PC-9 (cell line): ENCODE measurements at regions of chr15 and their contacts with region 1.

Region 1: GRCh38 chr15:69807755-69808154 is 290.0 kb downstream of the TLE3 start:
- DNase-seq: peak; percentile 68 to 74
- H3K4me3 ChIP-seq: no peak overlapping the region
- H3K27ac ChIP-seq: no peak overlapping the region
- H3K4me1 ChIP-seq: peaks cover 30% of the 10 kb centered on the region
- H3K27me3 ChIP-seq: no peaks in the 10 kb centered on the region
- CTCF ChIP-seq: no peak

Region 2: GRCh38 chr15:69424748-69425413 is 382.9 kb before region 1 on chr15:
- CTCF ChIA-PET with region 1: no interaction called
- POLR2A ChIA-PET with region 1: no interaction called
- intact Hi-C with region 1: no loop called
- DNase-seq: no peak
- H3K4me3 ChIP-seq: no peak overlapping the region
- H3K27ac ChIP-seq: no peak overlapping the region
- H3K4me1 ChIP-seq: no peaks in the 10 kb centered on the region
- H3K27me3 ChIP-seq: no peaks in the 10 kb centered on the region
- CTCF ChIP-seq: no peak

Region 3: GRCh38 chr15:69451951-69452691 is 355.6 kb before region 1 on chr15:
- CTCF ChIA-PET with region 1: no interaction called
- POLR2A ChIA-PET with region 1: no interaction called
- intact Hi-C with region 1: no loop called
- DNase-seq: peak in 1 of 2 experiments; percentile 8
- H3K4me3 ChIP-seq: peak overlapping the region; percentile 71; the same call in 1 of the 2 replicates
- H3K27ac ChIP-seq: peak overlapping the region; percentile 27; the same call in 1 of the 2 replicates
- H3K4me1 ChIP-seq: peaks cover 25% of the 10 kb centered on the region
- H3K27me3 ChIP-seq: no peaks in the 10 kb centered on the region
- CTCF ChIP-seq: no peak

Region 4: DNA sequence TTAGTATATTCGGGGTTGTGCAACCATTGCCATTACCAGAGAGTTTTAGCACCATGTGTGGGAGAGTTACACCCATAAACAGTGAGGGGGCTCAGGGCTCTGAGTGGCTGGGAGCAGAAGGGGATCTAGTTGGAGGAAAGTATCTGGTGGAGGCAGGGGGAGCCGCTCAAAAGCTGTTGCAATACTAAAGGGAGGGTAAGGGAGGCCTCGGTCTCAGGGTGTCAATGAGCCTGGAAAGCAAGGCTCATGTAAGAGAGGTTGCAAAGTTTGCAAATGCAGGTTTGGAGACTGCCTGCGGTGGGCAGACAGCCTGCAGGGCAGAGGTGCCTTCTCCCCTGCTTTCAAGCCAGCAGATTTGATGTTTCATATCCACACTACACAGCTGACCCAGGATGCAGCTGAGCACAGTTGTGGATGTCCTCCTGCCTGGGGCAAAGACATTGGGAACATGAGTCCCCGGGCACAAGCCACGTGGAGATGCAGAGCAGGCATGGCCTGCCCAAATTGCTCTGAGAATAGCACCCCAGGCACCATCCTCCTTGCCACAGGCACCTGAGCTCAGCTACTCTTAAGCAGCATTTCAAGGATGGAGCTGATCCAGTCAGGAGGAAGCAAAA is 108.5 kb after region 1 on chr15:
- CTCF ChIA-PET with region 1: no interaction called
- POLR2A ChIA-PET with region 1: interaction called, 18 read pairs
- intact Hi-C with region 1: no loop called
- DNase-seq: no peak
- H3K4me3 ChIP-seq: no peak overlapping the region
- H3K27ac ChIP-seq: no peak overlapping the region
- H3K4me1 ChIP-seq: no peaks in the 10 kb centered on the region
- H3K27me3 ChIP-seq: no peaks in the 10 kb centered on the region
- CTCF ChIP-seq: no peak